IMR-90 (cell line): ENCODE measurements at regions of chr22 and their contacts with region 1.

Region 1: GRCh38 chr22:46542011-46542985 is 4.9 kb upstream of the CELSR1 start:
- DNase-seq: peak; percentile 50
- ATAC-seq: peak; percentile 95
- H3K4me3 ChIP-seq: no peak overlapping the region
- H3K27ac ChIP-seq: no peak overlapping the region
- H3K4me1 ChIP-seq: peaks cover 13% of the 10 kb centered on the region
- H3K27me3 ChIP-seq: peaks cover 21% of the 10 kb centered on the region
- CTCF ChIP-seq: peak; percentile 94
- POLR2A ChIP-seq: 0 out of 2 replicates have a peak, but pooled peaks have one; percentile 43
- RAD21 ChIP-seq: peak; percentile 96

Region 2: DNA sequence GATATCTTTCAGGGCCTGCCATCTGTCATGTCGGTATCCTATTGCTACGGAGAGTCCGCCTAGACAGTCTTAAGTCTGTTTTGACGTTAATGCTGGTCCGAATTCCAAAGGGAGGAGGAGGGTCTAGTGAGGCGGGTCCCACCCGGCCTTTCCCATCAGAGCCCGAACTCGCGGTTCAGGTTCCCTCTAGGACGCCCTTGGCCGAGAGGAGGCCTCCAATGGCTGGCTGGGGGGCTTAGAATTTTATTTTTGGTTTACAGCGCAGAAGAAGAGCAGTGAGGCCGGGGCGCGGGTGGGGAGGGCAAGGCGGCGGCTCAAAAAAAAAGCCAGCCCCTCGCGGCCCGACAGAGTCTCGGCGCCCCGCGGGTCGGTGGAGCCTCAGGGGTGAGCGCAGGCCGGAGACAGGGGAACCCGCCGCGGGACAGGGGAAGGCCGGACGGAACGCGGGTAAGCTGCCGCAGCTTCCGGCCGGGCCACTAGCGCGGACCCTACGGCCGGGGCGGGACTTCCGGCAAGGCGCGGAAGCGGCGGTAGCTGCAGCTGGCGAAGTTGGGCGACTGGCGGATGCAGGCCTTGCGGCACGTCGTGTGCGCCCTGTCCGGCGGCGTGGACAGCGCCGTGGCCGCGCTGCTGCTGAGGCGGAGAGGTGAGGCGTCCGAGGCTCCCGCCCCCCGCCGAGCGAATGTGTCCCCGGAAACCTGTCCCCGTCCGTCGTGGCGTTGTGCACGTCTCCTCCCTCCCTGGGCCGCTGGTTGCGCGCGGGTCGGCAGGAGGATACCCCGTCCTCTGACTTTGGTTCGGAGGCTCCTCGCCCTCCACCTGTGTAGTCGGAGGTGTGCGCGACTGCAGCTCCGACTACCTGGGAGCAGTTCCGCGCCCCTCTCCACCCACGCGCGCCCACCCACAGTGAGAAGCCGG is 206.8 kb before region 1 on chr22 and contains the start of gene TRMU:
- CTCF ChIA-PET with region 1: no interaction called
- POLR2A ChIA-PET with region 1: no interaction called
- dilution Hi-C with region 1: no loop called
- in situ Hi-C with region 1: no loop called
- intact Hi-C with region 1: no loop called
- DNase-seq: peak; percentile 86
- ATAC-seq: peak; percentile 97
- H3K4me3 ChIP-seq: peak within 1 kb of the TSS; percentile 88
- H3K27ac ChIP-seq: peak within 1 kb of the TSS; percentile 85
- H3K4me1 ChIP-seq: peaks cover 2% of the 10 kb centered on the region; the same call in 1 of the 2 replicates
- H3K27me3 ChIP-seq: no peaks in the 10 kb centered on the region
- CTCF ChIP-seq: no peak
- POLR2A ChIP-seq: peak; percentile 65
- RAD21 ChIP-seq: no peak
- total RNA-seq, gene TRMU: 19.0 and 21.7 TPM in 2 replicates

Region 3: GRCh38 chr22:46355371-46355995 is 186.8 kb before region 1 on chr22:
- CTCF ChIA-PET with region 1: no interaction called
- POLR2A ChIA-PET with region 1: no interaction called
- dilution Hi-C with region 1: no loop called
- in situ Hi-C with region 1: no loop called
- intact Hi-C with region 1: loop called (anchors 1 kb)
- DNase-seq: peak; percentile 40
- ATAC-seq: peak; percentile 81
- H3K4me3 ChIP-seq: no peak overlapping the region
- H3K27ac ChIP-seq: no peak overlapping the region
- H3K4me1 ChIP-seq: no peaks in the 10 kb centered on the region
- H3K27me3 ChIP-seq: no peaks in the 10 kb centered on the region
- CTCF ChIP-seq: peak; percentile 68
- POLR2A ChIP-seq: no peak
- RAD21 ChIP-seq: peak; percentile 79

Region 4: GRCh38 chr22:46367707-46368191 is 174.5 kb before region 1 on chr22:
- CTCF ChIA-PET with region 1: interaction called, 26 read pairs
- POLR2A ChIA-PET with region 1: no interaction called
- dilution Hi-C with region 1: no loop called
- in situ Hi-C with region 1: loop called (anchors 5 kb)
- intact Hi-C with region 1: loop called (anchors 1 kb)
- DNase-seq: peak; percentile 40
- ATAC-seq: peak; percentile 93
- H3K4me3 ChIP-seq: no peak overlapping the region
- H3K27ac ChIP-seq: no peak overlapping the region
- H3K4me1 ChIP-seq: no peaks in the 10 kb centered on the region
- H3K27me3 ChIP-seq: peaks cover 13% of the 10 kb centered on the region; the same call in 1 of the 2 replicates
- CTCF ChIP-seq: peak; percentile 87
- POLR2A ChIP-seq: no peak
- RAD21 ChIP-seq: peak; percentile 77

Region 5: GRCh38 chr22:46484861-46485595 is 57.3 kb before region 1 on chr22:
- CTCF ChIA-PET with region 1: no interaction called
- POLR2A ChIA-PET with region 1: no interaction called
- dilution Hi-C with region 1: no loop called
- in situ Hi-C with region 1: no loop called
- intact Hi-C with region 1: no loop called
- DNase-seq: peak; percentile 61
- ATAC-seq: no peak
- H3K4me3 ChIP-seq: no peak overlapping the region
- H3K27ac ChIP-seq: no peak overlapping the region
- H3K4me1 ChIP-seq: peaks cover 3% of the 10 kb centered on the region; the same call in 1 of the 2 replicates
- H3K27me3 ChIP-seq: peaks cover 12% of the 10 kb centered on the region
- CTCF ChIP-seq: no peak
- POLR2A ChIP-seq: no peak
- RAD21 ChIP-seq: no peak